Calu3 (cell line): ENCODE measurements at regions of chr2 and their contacts with region 1.

Region 1: GRCh38 chr2:222671259-222672067 is at the start of gene MOGAT1:
- DNase-seq: peak; percentile 94
- H3K4me3 Mint-ChIP-seq: peak within 1 kb of the TSS; percentile 97
- H3K27ac Mint-ChIP-seq: peak within 1 kb of the TSS; percentile 98
- H3K4me1 Mint-ChIP-seq: peaks cover 71% of the 10 kb centered on the region
- H3K27me3 Mint-ChIP-seq: no peaks in the 10 kb centered on the region
- CTCF ChIP-seq: no peak
- total RNA-seq, gene MOGAT1: 35.9 and 51.2 TPM in 2 replicates

Region 2: DNA sequence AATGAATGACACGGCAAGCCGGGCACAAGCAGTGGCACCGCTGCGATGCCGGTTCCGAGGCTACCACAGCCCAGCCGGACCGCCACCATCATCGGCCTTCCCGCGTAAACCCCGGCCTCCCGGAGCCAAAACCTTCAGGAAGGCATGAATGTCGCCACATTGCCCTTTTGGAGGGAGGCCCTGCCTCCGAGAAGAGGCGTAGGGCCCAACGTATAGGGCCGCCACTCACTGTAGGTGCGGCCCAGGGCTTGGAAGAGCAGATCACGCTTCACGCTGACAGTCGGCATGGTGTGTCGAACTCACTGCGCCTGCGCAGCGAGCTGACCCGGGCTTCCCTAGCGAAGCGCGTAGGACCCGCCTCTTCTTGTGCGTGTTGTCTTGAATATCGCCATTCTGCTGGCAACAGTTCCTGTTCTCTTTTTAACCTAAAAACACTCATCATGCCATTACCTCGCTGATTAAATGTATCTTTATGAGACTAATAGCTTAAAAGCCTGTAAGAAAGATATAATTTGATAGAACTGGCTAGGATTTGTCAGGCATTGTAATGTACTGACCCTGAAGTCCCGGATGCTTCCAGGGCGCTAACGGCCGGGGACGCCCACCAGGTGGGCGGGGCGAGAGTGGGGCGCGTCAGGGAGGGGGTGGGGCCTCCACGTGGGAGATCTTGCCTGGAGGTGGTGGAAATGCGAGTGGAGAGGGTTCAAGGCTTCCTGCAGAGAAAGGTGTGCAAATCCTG is 15.5 kb before region 1 on chr2 and contains the start of gene FARSB:
- CTCF ChIA-PET with region 1: interaction called, 5 read pairs
- intact Hi-C with region 1: loop called (anchors 1 kb)
- DNase-seq: peak; percentile 93
- H3K4me3 Mint-ChIP-seq: peak within 1 kb of the TSS; percentile 86
- H3K27ac Mint-ChIP-seq: peak within 1 kb of the TSS; percentile 90
- H3K4me1 Mint-ChIP-seq: peaks cover 58% of the 10 kb centered on the region
- H3K27me3 Mint-ChIP-seq: no peaks in the 10 kb centered on the region
- CTCF ChIP-seq: no peak
- total RNA-seq, gene FARSB: 50.6 and 67.6 TPM in 2 replicates

Region 3: DNA sequence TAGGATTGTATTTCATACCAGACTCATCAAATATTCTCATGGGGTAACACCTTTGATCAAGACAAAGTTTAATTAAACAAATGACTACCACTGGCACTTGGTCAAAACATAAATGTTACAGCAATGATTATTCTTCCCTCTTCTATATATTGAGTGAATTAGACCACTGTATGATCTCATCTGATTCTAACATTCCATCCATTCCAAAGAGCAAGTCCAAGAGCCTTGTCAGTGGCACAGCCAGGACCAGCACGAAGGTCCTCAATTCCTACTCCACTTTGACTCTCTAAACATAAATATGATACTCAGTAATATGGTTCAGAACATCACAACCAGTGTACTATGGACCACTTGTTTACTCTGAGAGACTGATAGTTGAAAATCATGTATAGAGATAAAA is 1079.5 kb after region 1 on chr2:
- CTCF ChIA-PET with region 1: no interaction called
- intact Hi-C with region 1: no loop called
- DNase-seq: no peak
- H3K4me3 Mint-ChIP-seq: no peak overlapping the region
- H3K27ac Mint-ChIP-seq: no peak overlapping the region
- H3K4me1 Mint-ChIP-seq: peaks cover 20% of the 10 kb centered on the region
- H3K27me3 Mint-ChIP-seq: no peaks in the 10 kb centered on the region
- CTCF ChIP-seq: no peak